Left ventricle myocardium superior (tissue), 1 donor: ENCODE measurements at regions of chr18 and their contacts with region 1.

Region 1: GRCh38 chr18:56575819-56576663 is 62.4 kb downstream of the TXNL1 start:
- DNase-seq: no peak
- ATAC-seq: peak; percentile 88

Region 2: GRCh38 chr18:55415258-55415871 is 1160.7 kb before region 1 on chr18:
- intact Hi-C with region 1: loop called (anchors 10 kb)
- DNase-seq: peak; percentile 95
- ATAC-seq: peak; percentile 90

Region 3: GRCh38 chr18:57737400-57738060 is 1161.5 kb after region 1 on chr18:
- intact Hi-C with region 1: no loop called
- DNase-seq: peak; percentile 67
- ATAC-seq: peak; percentile 96